ENCODE measurements at regions of chr2 and their contacts with region 1.

Region 1: DNA sequence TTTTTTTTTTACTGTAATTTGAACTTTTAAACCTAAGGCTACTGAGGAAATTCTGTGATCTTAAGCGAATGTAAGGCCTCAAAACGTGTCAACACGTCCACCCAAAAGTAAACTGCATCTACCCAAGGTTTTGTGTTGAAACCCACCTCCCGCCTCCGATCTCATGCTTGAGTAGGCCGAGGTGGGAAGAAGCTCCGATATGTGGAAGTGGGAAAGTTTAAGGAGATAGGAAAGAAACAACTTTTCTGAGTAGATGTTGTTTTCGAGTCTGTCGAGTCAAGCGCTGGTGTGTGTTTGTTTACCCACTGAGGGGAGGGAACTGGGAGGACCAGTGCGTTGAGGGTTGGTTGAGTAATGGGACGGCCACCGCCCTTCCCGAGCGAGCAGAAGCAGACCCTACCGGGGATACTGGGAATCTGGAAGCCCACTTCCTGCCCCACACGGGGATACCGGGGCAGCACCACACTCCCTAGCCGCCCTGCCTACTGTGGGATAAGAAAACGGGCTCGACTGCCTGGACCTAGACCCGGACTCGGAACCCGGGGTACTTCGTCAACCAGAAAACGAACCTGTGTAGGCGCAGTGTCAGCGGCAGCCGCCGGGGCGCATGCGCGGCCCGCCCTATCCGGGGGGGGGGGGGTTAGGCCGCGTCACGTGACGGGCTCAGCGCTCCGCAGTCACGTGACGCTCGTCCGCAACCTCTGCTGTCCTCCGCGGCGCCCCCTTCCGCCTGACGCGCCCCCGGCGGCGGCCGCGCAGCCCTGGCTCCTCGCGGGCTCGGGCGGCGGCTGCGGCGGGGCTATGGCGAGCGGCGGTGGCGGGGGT is at the start of gene RETREG2:
- DNase-seq: peak; percentile 91
- ATAC-seq: peak; percentile 82
- total RNA-seq, gene RETREG2: 37.4 TPM

Region 2: GRCh38 chr2:218944759-218945404 is 232.9 kb before region 1 on chr2:
- intact Hi-C with region 1: no loop called
- DNase-seq: no peak
- ATAC-seq: no peak

Region 3: GRCh38 chr2:219133976-219134375 is 43.8 kb before region 1 on chr2:
- intact Hi-C with region 1: no loop called
- DNase-seq: no peak
- ATAC-seq: no peak

Region 4: DNA sequence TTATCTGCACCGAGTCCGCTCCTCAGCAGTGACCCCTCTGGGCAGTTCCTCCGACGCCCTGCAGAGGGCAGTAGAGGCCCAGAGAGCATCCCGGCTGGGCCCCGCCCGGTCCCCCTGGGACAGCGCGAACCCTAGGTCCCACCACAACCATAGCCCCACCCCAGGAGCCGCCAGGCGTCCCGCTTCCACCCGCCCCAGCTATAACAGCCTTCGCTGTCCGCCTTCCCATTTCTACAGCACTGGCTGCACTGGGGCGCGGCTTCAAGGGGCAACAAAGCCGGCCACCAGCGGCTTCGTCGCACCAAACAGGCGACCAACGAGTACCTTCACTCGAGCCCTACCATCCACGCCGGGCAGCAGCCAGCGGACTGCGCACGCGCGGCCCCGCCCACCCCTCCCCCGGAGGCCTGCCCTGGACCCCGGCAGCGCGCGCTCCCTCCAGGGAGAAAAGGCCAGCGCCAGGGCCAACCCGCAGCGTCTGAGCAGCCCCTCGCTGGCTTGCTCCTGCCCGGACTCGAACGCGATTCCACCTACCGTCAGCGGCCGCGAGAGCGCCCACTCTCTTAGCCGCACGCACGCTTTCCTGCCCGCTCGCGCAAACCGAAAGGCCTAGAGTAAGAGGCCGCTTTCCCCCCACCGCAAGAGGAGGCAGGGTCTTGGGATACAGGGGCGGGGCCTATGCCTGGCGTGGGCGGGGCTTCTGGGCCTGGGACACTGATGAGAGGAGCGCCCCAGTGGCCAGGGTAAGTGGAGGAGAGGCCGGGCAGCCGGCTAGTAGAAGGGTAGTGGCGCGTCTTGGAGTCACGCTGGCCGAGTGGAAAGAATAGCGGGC is 17.4 kb before region 1 on chr2 and contains the start of gene NHEJ1:
- intact Hi-C with region 1: loop called (anchors 1 kb)
- DNase-seq: peak; percentile 98
- ATAC-seq: peak; percentile 98
- total RNA-seq, gene NHEJ1: 9.7 TPM

Region 5: DNA sequence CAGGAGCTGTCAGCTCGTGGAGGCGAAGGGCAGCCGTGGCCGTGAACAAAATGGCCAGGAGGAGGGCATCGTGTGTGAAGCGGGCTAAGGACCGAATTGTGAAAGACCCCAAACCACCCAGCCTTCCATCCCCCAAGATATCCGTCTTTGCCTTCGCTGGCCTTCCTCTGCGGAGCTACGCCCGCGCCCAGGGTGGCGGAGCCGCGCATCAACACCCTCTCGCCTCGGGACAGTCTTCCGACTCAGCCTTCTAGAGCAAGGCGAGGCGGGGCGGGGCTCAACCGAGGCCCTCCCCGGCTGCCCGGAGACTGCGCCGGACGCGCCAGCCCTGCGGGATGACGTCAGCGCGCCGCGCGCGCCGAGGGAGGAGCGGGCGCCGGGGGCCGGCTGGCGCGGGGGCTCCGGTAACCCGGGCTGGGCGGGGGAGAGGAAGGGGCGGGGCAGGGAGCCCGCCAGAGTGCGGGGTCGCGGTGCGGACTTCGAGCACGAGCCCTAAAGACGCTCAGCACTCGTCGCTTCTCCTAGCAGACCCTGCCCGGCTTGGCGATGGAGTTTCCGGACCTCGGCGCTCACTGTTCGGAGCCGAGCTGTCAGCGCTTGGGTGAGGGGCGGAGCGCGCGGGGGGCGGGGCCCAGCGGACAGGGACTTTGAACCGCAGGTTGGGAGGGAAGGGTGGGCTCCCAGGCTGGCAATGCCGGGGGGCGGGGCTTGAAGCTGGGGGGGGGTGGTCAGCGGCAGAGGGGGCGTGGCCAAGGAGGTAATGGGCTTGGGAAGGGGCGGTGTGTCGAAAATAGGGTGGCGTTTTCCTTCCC is 28.9 kb after region 1 on chr2 and contains the start of gene ZFAND2B:
- intact Hi-C with region 1: loop called (anchors 2 kb)
- DNase-seq: peak; percentile 98
- ATAC-seq: peak; percentile 98
- total RNA-seq, gene ZFAND2B: 24.3 TPM

Region 6: GRCh38 chr2:219253753-219254590 is 76.2 kb after region 1 on chr2 and contains the start of gene TUBA4A:
- intact Hi-C with region 1: loop called (anchors 2 kb)
- DNase-seq: peak; percentile 95
- ATAC-seq: peak; percentile 92
- total RNA-seq, gene TUBA4A: 128 TPM

Region 7: GRCh38 chr2:219388127-219388844 is 210.5 kb after region 1 on chr2:
- intact Hi-C with region 1: loop called (anchors 5 kb)
- DNase-seq: peak; percentile 99
- ATAC-seq: peak; percentile 90

Measured in Right ventricle myocardium inferior (tissue), 1 donor.